B cell (primary cell): ENCODE measurements at regions of chr12 and their contacts with region 1.

Region 1: DNA sequence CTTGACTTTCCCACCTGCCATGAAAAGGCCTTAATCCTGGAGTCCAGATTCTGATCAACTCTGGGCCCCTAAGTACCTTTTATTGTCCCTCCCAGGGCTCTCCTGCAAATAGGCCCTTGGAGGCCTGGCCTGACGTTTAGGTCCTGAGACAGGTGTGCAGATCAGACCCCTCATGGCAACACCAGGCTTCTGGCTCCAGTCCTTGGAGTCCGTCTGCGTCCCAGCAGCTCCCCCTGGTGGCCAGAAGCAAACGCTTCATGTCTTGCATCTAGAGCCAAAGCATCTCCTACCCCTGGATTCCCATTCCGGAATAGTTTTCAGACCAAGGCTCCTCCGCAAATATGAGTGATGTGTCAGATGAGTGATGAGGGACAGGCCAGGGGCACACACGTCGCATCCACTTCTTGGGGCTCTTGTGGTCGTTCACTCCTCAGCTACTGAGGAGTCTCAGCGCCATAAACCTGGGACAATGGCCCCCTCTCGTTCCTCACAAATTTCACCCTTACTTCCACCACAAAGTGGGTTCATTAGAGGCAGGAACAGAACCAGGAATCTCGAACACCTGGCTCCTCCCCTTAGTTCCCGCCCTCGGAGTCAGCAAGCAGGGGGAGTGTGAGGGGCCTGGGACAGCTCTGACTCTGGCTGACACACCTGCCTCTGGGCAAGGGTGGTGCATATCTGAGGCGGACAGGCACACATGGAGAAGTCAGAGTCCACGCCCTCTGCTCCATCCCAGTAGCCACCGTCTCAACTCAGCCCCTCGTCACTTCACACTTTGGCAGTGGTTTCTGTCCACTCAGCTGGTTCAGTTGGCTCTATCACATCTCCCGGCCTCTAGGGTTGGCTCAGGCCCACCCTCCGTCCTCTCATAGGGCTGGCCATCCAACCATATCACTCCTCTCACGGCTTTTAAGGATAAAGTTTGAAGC is 77.9 kb upstream of the PWP1 start:
- DNase-seq: peak; percentile 83
- ATAC-seq: peak; percentile 39
- H3K4me3 ChIP-seq: no peak overlapping the region
- H3K4me3 Mint-ChIP-seq: no peak overlapping the region
- H3K27ac ChIP-seq: no peak overlapping the region
- H3K27ac Mint-ChIP-seq: no peak overlapping the region
- H3K4me1 ChIP-seq: no peaks in the 10 kb centered on the region
- H3K4me1 Mint-ChIP-seq: no peaks in the 10 kb centered on the region
- H3K27me3 ChIP-seq: no peaks in the 10 kb centered on the region
- H3K27me3 Mint-ChIP-seq: no peaks in the 10 kb centered on the region
- CTCF ChIP-seq: peak; percentile 93

Region 2: GRCh38 chr12:107126796-107127481 is 480.8 kb before region 1 on chr12:
- CTCF ChIA-PET with region 1: interaction called, 246 read pairs
- POLR2A ChIA-PET with region 1: no interaction called
- intact Hi-C with region 1: no loop called
- DNase-seq: no peak
- ATAC-seq: no peak
- H3K4me3 ChIP-seq: no peak overlapping the region
- H3K4me3 Mint-ChIP-seq: no peak overlapping the region
- H3K27ac ChIP-seq: no peak overlapping the region
- H3K27ac Mint-ChIP-seq: no peak overlapping the region
- H3K4me1 ChIP-seq: no peaks in the 10 kb centered on the region
- H3K4me1 Mint-ChIP-seq: no peaks in the 10 kb centered on the region
- H3K27me3 ChIP-seq: peaks cover 0 to 11% (median 6%) of the 10 kb centered on the region in 4 experiments
- H3K27me3 Mint-ChIP-seq: peaks cover 28% of the 10 kb centered on the region
- CTCF ChIP-seq: peak; percentile 5

Region 3: DNA sequence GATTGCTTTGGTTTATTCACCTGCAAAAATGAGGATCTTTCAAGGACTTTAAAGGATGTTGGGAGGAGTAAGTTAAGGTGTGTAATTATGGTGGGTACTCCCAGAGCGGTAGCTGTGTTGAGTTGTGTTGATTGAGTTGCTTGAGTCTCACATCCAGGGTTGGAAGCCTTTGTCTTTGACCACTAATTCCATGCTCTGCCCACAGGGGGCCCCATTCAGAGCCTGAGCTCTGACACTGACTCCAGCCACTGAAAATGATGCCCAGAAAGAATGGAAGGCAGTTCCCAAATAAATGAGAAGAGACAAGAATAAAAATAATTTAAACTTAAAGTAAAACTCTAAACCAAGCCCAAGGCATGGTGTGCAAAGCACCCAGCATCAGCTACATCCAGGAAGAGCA is 159.5 kb before region 1 on chr12:
- CTCF ChIA-PET with region 1: interaction called, 5 read pairs
- POLR2A ChIA-PET with region 1: no interaction called
- intact Hi-C with region 1: loop called (anchors 5 kb)
- DNase-seq: no peak
- ATAC-seq: no peak
- H3K4me3 ChIP-seq: no peak overlapping the region
- H3K4me3 Mint-ChIP-seq: no peak overlapping the region
- H3K27ac ChIP-seq: no peak overlapping the region
- H3K27ac Mint-ChIP-seq: no peak overlapping the region
- H3K4me1 ChIP-seq: no peaks in the 10 kb centered on the region
- H3K4me1 Mint-ChIP-seq: no peaks in the 10 kb centered on the region
- H3K27me3 ChIP-seq: no peaks in the 10 kb centered on the region
- H3K27me3 Mint-ChIP-seq: peaks cover 17% of the 10 kb centered on the region
- CTCF ChIP-seq: no peak

Region 4: GRCh38 chr12:108175310-108175709 is 567.6 kb after region 1 on chr12:
- CTCF ChIA-PET with region 1: no interaction called
- POLR2A ChIA-PET with region 1: no interaction called
- intact Hi-C with region 1: no loop called
- DNase-seq: no peak
- ATAC-seq: no peak
- H3K4me3 ChIP-seq: no peak overlapping the region
- H3K4me3 Mint-ChIP-seq: no peak overlapping the region
- H3K27ac ChIP-seq: no peak overlapping the region
- H3K27ac Mint-ChIP-seq: no peak overlapping the region
- H3K4me1 ChIP-seq: no peaks in the 10 kb centered on the region
- H3K4me1 Mint-ChIP-seq: no peaks in the 10 kb centered on the region
- H3K27me3 ChIP-seq: no peaks in the 10 kb centered on the region
- H3K27me3 Mint-ChIP-seq: peaks cover 5% of the 10 kb centered on the region
- CTCF ChIP-seq: no peak